ENCODE measurements at regions of chr9 and their contacts with region 1.

Region 1: DNA sequence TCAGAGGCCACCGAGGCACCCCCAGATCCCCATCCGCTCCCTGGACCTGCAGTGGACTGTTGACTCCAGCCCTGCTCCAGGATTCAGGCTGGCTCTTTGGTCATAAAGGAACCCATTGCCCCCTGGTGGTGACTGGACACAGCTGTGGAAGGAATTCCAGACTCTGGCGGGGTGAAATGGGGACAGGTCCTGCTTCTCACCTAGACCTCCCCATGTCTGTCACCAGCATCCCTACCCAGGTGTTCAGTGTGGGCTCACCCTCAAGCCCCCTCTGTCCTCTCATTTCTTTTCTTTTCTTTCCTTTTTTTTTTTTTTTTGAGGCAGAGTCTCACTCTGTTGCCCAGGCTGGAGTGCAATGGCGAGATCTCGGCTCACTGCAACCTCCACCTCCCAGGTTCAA is 25.5 kb upstream of the STXBP1 start:
- DNase-seq: peak in 1 of 2 experiments; percentile 82
- H3K4me3 ChIP-seq: no peak overlapping the region
- H3K27ac ChIP-seq: no peak overlapping the region
- H3K4me1 ChIP-seq: peaks cover 23% of the 10 kb centered on the region
- H3K27me3 ChIP-seq: no peaks in the 10 kb centered on the region
- CTCF ChIP-seq: peak; percentile 93

Region 2: DNA sequence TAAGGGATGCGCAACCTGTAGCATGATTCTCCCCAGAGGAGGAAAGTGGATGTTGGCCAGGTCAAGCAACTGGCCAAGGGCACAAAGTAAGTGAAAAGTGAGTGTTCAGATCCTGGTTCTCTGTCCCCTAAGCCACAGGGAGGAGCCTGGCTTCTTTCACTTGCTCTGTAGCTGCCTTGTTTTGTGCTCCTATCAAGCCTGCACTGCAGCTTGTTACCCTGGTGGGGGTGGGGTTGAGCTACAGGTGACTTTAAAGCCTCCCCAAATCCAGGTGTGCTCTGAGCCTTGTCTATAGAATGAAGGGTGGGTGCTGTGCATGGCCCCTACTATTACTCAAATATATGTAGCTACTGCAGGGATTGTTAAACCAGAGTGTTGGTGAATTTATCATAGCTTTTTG is 639.0 kb before region 1 on chr9:
- CTCF ChIA-PET with region 1: no interaction called
- POLR2A ChIA-PET with region 1: no interaction called
- intact Hi-C with region 1: loop called (anchors 10 kb)
- DNase-seq: peak; percentile 50 to 61
- H3K4me3 ChIP-seq: no peak overlapping the region
- H3K27ac ChIP-seq: no peak overlapping the region
- H3K4me1 ChIP-seq: 0 out of 2 replicates have a peak, but pooled peaks cover 7% of the 10 kb centered on the region
- H3K27me3 ChIP-seq: no peaks in the 10 kb centered on the region
- CTCF ChIP-seq: peak; percentile 64

Region 3: DNA sequence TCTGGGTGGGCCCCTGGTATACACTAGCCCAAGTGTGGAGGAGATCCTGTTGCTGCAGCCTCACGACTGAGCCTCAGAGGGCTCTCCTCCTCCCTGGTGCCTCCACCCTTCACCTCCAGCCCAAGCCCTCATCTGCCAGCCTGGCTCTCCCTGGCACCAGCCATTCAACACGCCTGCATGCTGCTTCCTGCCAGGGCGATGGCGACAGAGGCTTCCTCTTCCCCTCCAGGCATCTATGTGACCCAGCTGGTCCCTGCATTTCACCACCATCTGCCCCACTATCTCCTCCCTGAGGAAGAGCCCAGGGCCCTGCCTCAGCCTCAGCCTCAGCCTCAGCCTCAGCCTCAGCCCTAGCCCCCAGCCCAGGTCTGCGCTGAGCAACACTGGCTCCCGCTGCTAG is 409.3 kb before region 1 on chr9:
- CTCF ChIA-PET with region 1: no interaction called
- POLR2A ChIA-PET with region 1: no interaction called
- intact Hi-C with region 1: no loop called
- DNase-seq: no peak
- H3K4me3 ChIP-seq: no peak overlapping the region
- H3K27ac ChIP-seq: no peak overlapping the region
- H3K4me1 ChIP-seq: no peaks in the 10 kb centered on the region
- H3K27me3 ChIP-seq: no peaks in the 10 kb centered on the region
- CTCF ChIP-seq: no peak

Region 4: GRCh38 chr9:127503947-127504782 is 82.4 kb before region 1 on chr9:
- CTCF ChIA-PET with region 1: interaction called, 6 read pairs
- POLR2A ChIA-PET with region 1: no interaction called
- intact Hi-C with region 1: loop called (anchors 1 kb)
- DNase-seq: peak; percentile 60 to 85
- H3K4me3 ChIP-seq: no peak overlapping the region
- H3K27ac ChIP-seq: no peak overlapping the region
- H3K4me1 ChIP-seq: no peaks in the 10 kb centered on the region
- H3K27me3 ChIP-seq: no peaks in the 10 kb centered on the region
- CTCF ChIP-seq: peak; percentile 85

Region 5: DNA sequence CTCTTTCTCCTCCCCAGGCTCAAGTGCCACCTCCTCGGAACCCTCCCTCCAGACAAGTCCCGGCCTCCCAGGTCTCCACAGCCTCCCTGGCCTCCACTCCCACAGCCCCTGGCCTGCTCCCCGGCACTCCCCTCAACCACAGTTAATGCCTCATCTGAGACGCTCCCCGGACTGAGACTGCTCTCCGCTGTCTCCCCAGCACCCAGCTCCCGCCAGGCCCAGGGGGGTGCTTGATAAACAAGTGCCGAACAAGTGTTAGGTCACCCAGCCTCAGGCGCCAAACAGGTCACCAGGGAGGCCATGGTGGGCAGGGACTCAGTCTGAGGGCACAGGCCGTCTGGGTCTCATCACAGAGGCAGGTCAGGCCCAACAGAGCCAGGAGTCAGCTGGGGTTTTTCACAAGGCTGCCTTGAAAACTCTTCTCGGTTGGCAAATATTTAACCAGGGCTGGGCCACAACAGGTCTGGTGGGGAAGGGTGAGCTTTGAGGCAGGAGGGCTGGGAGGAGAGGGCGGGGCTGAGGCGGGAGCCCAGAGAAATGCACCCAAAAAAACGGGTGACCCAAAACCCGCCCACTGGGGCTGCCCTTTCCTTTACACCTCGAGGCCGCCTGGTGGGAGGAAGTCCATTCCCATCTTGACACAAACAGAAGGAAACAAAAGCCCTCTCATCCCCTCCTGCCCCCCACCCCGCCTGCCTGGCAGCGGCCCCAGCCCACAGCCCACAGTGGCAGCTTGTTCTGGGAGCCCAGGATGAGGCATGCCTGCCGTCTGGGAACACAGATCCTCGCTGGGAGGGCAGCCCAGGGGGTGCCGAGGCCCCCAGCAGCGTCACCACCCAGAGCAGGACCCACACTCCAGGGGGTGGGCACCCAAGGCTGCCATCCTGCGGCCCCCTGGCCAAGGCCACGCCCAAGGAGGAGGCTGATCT is 41.1 kb before region 1 on chr9:
- CTCF ChIA-PET with region 1: interaction called, 4 read pairs
- POLR2A ChIA-PET with region 1: interaction called, 11 read pairs
- intact Hi-C with region 1: loop called (anchors 1 kb)
- DNase-seq: peak; percentile 96 to 97
- H3K4me3 ChIP-seq: peak overlapping the region; percentile 46; the same call in 1 of the 2 replicates
- H3K27ac ChIP-seq: peak overlapping the region; percentile 90
- H3K4me1 ChIP-seq: peaks cover 72% of the 10 kb centered on the region
- H3K27me3 ChIP-seq: no peaks in the 10 kb centered on the region
- CTCF ChIP-seq: 0 out of 2 replicates have a peak, but pooled peaks have one; percentile 23

Region 6: GRCh38 chr9:127568971-127569885 is 17.3 kb before region 1 on chr9:
- CTCF ChIA-PET with region 1: interaction called, 13 read pairs
- POLR2A ChIA-PET with region 1: interaction called, 8 read pairs
- intact Hi-C with region 1: loop called (anchors 1 kb)
- DNase-seq: peak; percentile 67 to 88
- H3K4me3 ChIP-seq: peak overlapping the region; percentile 87
- H3K27ac ChIP-seq: peak overlapping the region; percentile 93
- H3K4me1 ChIP-seq: peaks cover 76% of the 10 kb centered on the region
- H3K27me3 ChIP-seq: no peaks in the 10 kb centered on the region
- CTCF ChIP-seq: no peak

Region 7: DNA sequence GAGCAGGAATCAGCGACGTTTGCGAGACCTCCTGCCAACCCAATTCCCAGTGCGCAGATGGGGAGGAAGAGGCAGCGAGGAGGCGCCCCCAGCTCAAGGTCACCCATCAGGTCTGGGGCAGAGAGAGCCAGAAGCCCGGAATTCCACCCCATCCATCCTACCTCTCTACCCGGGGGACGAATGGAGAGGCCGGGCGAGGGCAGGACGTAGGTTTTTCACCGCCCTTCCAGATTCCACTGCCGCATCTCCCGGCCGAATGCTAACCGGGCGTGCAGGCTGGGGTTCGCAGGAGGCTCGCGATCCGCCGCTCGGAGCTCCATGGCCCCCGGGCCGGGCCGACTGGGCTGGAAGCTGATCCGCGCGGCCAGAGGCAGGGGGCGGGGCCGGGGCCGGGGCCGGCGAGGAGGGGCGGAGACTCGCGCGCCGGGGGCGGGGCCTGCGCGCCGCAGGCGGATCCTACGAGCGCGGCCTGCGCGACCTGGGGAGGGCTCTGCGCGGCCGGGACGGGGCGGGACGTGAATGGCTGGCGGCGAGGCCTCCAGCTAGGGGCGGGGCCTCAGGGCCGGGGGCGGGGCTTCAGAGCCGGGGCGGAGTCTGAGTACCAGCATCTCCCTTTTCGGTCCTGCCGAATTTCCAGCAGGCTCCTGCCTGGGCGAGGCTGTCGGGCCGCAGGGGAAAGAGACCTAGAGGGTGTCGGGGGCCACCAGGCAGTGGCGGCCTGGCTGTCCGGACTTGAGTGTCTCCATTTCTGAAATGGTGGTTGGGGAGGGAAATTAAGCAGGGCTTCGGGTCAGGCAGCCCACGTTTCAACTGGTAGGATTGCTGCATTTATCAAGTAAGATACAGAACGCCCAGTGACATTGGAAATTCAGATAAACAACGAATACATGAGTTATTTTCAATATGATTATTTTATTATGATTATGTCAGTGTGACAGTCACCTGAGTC is 330.4 kb after region 1 on chr9 and contains the start of gene ST6GALNAC4:
- CTCF ChIA-PET with region 1: no interaction called
- POLR2A ChIA-PET with region 1: no interaction called
- intact Hi-C with region 1: loop called (anchors 1 kb)
- DNase-seq: peak; percentile 61 to 95
- H3K4me3 ChIP-seq: peak within 1 kb of the TSS; percentile 92
- H3K27ac ChIP-seq: peak within 1 kb of the TSS; percentile 97
- H3K4me1 ChIP-seq: peaks cover 64% of the 10 kb centered on the region
- H3K27me3 ChIP-seq: no peaks in the 10 kb centered on the region
- CTCF ChIP-seq: no peak
- total RNA-seq, gene ST6GALNAC4: 28.3 and 44.3 TPM in 2 replicates

Measured in PC-9 (cell line).